Activated naive CD4-positive, alpha-beta T cell treated with anti-CD3 and anti-CD28 coated beads, Interleukin-2, amount 10 ng/mL, durations not matched to agents 7 days and 5 days (primary cell): ENCODE measurements at regions of chr2 and their contacts with region 1.

Region 1: GRCh38 chr2:63841254-63842022 is at the start of gene UGP2:
- DNase-seq: peak; percentile 94
- H3K4me3 Mint-ChIP-seq: peak within 1 kb of the TSS; percentile 95
- H3K27ac Mint-ChIP-seq: peak within 1 kb of the TSS; percentile 100
- H3K4me1 Mint-ChIP-seq: peaks cover 54% of the 10 kb centered on the region
- H3K27me3 Mint-ChIP-seq: peaks cover 9% of the 10 kb centered on the region

Region 2: GRCh38 chr2:63856303-63856603 is 14.8 kb after region 1 on chr2:
- CTCF ChIA-PET with region 1: interaction called, 32 read pairs
- DNase-seq: peak; percentile 75
- H3K4me3 Mint-ChIP-seq: peak overlapping the region; percentile 53
- H3K27ac Mint-ChIP-seq: peak overlapping the region; percentile 99
- H3K4me1 Mint-ChIP-seq: peaks cover 77% of the 10 kb centered on the region
- H3K27me3 Mint-ChIP-seq: no peaks in the 10 kb centered on the region

Region 3: DNA sequence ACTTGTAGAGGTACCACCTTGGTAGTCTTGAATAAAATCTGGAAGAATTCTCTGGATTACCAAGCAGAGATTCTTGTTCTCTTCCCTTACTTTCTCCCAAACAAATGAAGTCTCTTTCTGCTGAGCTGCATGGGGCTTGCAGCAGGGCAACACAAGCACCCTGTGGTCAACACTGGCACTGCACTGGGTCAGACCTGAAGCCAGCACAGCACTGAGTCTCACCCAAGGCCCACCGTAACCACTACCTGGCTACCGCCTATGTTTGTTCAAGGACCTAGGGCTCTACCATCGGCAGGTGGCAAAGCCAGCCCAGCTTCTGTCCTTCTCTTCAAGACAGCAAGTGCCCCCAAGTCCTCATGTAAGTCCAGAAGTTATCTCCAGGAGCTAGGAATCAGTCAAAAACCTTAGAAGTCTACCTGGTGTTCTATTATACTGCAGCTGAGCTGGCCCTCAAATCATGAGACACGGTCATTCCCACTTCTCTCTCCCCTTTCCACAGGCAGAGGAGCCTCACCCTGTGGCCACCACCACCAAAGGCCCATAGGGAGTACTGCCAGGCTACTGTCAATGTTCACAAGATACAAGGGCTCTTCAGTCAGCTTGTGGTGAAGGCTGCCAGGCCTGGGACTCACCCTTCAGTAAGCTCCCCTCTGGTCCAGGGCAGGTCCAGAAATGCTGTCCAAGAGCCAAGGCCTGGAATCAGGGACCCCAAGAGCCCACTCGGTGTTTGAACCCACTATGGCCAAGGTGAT is 159.4 kb after region 1 on chr2:
- CTCF ChIA-PET with region 1: no interaction called
- DNase-seq: no peak
- H3K4me3 Mint-ChIP-seq: no peak overlapping the region
- H3K27ac Mint-ChIP-seq: no peak overlapping the region
- H3K4me1 Mint-ChIP-seq: no peaks in the 10 kb centered on the region
- H3K27me3 Mint-ChIP-seq: no peaks in the 10 kb centered on the region

Region 4: GRCh38 chr2:64114063-64114911 is 272.8 kb after region 1 on chr2:
- CTCF ChIA-PET with region 1: no interaction called
- DNase-seq: no peak
- H3K4me3 Mint-ChIP-seq: peak overlapping the region; percentile 2
- H3K27ac Mint-ChIP-seq: peak overlapping the region; percentile 82
- H3K4me1 Mint-ChIP-seq: peaks cover 61% of the 10 kb centered on the region
- H3K27me3 Mint-ChIP-seq: no peaks in the 10 kb centered on the region